Activated CD8-positive, alpha-beta T cell treated with anti-CD3 and anti-CD28 coated beads for 36 hours (primary cell): ENCODE measurements at regions of chr1 and their contacts with region 1.

Region 1: GRCh38 chr1:85259118-85259911 is at the start of gene C1orf52:
- DNase-seq: peak; percentile 98
- ATAC-seq: peak; percentile 99
- H3K4me3 Mint-ChIP-seq: peak within 1 kb of the TSS; percentile 87
- H3K27ac Mint-ChIP-seq: peak within 1 kb of the TSS; percentile 96
- H3K4me1 Mint-ChIP-seq: peaks cover 36% of the 10 kb centered on the region
- H3K27me3 Mint-ChIP-seq: no peaks in the 10 kb centered on the region
- CTCF ChIP-seq: peak; percentile 93
- total RNA-seq, gene C1orf52: 26.8 to 35.7 TPM

Region 2: GRCh38 chr1:85027242-85027983 is 231.9 kb before region 1 on chr1:
- CTCF ChIA-PET with region 1: interaction called, 11 read pairs
- POLR2A ChIA-PET with region 1: interaction called, 4 read pairs
- intact Hi-C with region 1: no loop called
- DNase-seq: peak; percentile 42
- ATAC-seq: peak; percentile 89
- H3K4me3 Mint-ChIP-seq: no peak overlapping the region
- H3K27ac Mint-ChIP-seq: peak overlapping the region; percentile 80
- H3K4me1 Mint-ChIP-seq: peaks cover 13% of the 10 kb centered on the region
- H3K27me3 Mint-ChIP-seq: peaks cover 1% of the 10 kb centered on the region
- CTCF ChIP-seq: peak; percentile 26

Region 3: DNA sequence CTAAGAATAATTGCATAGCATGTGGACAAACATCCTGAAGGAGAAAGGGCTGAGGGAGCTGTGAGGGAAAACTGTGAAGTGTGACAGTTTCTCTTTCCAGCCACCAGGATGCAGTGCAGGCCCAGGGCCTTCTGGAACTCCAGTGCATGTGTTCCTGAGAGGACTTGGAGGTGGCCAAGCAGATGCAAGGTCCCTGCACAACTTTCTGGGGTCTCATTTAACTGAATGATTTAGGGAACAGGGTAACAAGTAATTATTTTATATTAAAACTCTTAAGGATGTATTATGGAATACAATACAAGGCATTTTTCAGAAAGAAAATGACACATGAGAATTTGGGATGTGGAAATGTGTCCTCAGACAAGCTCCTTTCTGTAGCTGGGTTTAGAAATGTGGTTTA is 149.8 kb before region 1 on chr1:
- CTCF ChIA-PET with region 1: interaction called, 45 read pairs
- POLR2A ChIA-PET with region 1: interaction called, 3 read pairs
- intact Hi-C with region 1: loop called (anchors 5 kb)
- DNase-seq: peak; percentile 56
- ATAC-seq: peak; percentile 87
- H3K4me3 Mint-ChIP-seq: no peak overlapping the region
- H3K27ac Mint-ChIP-seq: no peak overlapping the region
- H3K4me1 Mint-ChIP-seq: no peaks in the 10 kb centered on the region
- H3K27me3 Mint-ChIP-seq: peaks cover 4% of the 10 kb centered on the region
- CTCF ChIP-seq: peak; percentile 72

Region 4: GRCh38 chr1:85240174-85240601 is 19.1 kb before region 1 on chr1:
- CTCF ChIA-PET with region 1: interaction called, 25 read pairs
- POLR2A ChIA-PET with region 1: no interaction called
- intact Hi-C with region 1: no loop called
- DNase-seq: peak; percentile 46
- ATAC-seq: peak; percentile 84
- H3K4me3 Mint-ChIP-seq: no peak overlapping the region
- H3K27ac Mint-ChIP-seq: peak overlapping the region; percentile 48
- H3K4me1 Mint-ChIP-seq: peaks cover 13% of the 10 kb centered on the region
- H3K27me3 Mint-ChIP-seq: no peaks in the 10 kb centered on the region
- CTCF ChIP-seq: peak; percentile 46

Region 5: GRCh38 chr1:85276215-85276977 is 17.1 kb after region 1 on chr1 and contains the start of gene BCL10:
- CTCF ChIA-PET with region 1: interaction called, 138 read pairs
- POLR2A ChIA-PET with region 1: interaction called, 24 read pairs
- intact Hi-C with region 1: no loop called
- DNase-seq: peak; percentile 98
- ATAC-seq: peak; percentile 97
- H3K4me3 Mint-ChIP-seq: peak within 1 kb of the TSS; percentile 86
- H3K27ac Mint-ChIP-seq: peak within 1 kb of the TSS; percentile 91
- H3K4me1 Mint-ChIP-seq: peaks cover 51% of the 10 kb centered on the region
- H3K27me3 Mint-ChIP-seq: no peaks in the 10 kb centered on the region
- CTCF ChIP-seq: no peak
- total RNA-seq, gene BCL10: 30.6 to 32.3 TPM